ENCODE measurements at regions of chr10 and their contacts with region 1.

Region 1: GRCh38 chr10:96374985-96375830 is 16.4 kb upstream of the OPALIN start:
- DNase-seq: peak; percentile 93
- H3K4me3 ChIP-seq: peak overlapping the region; percentile 21 to 46 (median 43)
- H3K27ac ChIP-seq: no peak overlapping the region
- H3K4me1 ChIP-seq: peaks cover 0 to 52% (median 48%) of the 10 kb centered on the region in 4 donors
- H3K27me3 ChIP-seq: no peaks in the 10 kb centered on the region
- CTCF ChIP-seq: peak; percentile 92 to 99 (median 96)
- EP300 ChIP-seq: no peak
- POLR2A ChIP-seq: no peak

Region 2: GRCh38 chr10:96395931-96396877 is 21.0 kb after region 1 on chr10:
- intact Hi-C with region 1: loop called (anchors 1 kb)
- DNase-seq: peak; percentile 87
- H3K4me3 ChIP-seq: no peak overlapping the region
- H3K27ac ChIP-seq: no peak overlapping the region
- H3K4me1 ChIP-seq: peaks cover 0 to 13% (median 7%) of the 10 kb centered on the region in 4 donors
- H3K27me3 ChIP-seq: peaks cover 0 to 9% (median 0%) of the 10 kb centered on the region in 3 donors
- CTCF ChIP-seq: peak; percentile 79 to 88 (median 82)
- EP300 ChIP-seq: no peak
- POLR2A ChIP-seq: no peak

Region 3: GRCh38 chr10:96513698-96514561 is 138.7 kb after region 1 on chr10 and contains the start of gene TLL2:
- intact Hi-C with region 1: loop called (anchors 1 kb)
- DNase-seq: peak; percentile 94
- H3K4me3 ChIP-seq: peak within 1 kb of the TSS; percentile 29 to 60 (median 54)
- H3K27ac ChIP-seq: peak within 1 kb of the TSS in 3 of 4 donors; percentile 52 to 64 (median 58)
- H3K4me1 ChIP-seq: peaks cover 0 to 26% (median 22%) of the 10 kb centered on the region in 4 donors
- H3K27me3 ChIP-seq: peaks cover 0 to 20% (median 0%) of the 10 kb centered on the region in 3 donors
- CTCF ChIP-seq: peak; percentile 60 to 80 (median 73)
- EP300 ChIP-seq: no peak
- POLR2A ChIP-seq: no peak
- total RNA-seq, gene TLL2: 0.14 to 2.2 (median 0.26) TPM

Region 4: DNA sequence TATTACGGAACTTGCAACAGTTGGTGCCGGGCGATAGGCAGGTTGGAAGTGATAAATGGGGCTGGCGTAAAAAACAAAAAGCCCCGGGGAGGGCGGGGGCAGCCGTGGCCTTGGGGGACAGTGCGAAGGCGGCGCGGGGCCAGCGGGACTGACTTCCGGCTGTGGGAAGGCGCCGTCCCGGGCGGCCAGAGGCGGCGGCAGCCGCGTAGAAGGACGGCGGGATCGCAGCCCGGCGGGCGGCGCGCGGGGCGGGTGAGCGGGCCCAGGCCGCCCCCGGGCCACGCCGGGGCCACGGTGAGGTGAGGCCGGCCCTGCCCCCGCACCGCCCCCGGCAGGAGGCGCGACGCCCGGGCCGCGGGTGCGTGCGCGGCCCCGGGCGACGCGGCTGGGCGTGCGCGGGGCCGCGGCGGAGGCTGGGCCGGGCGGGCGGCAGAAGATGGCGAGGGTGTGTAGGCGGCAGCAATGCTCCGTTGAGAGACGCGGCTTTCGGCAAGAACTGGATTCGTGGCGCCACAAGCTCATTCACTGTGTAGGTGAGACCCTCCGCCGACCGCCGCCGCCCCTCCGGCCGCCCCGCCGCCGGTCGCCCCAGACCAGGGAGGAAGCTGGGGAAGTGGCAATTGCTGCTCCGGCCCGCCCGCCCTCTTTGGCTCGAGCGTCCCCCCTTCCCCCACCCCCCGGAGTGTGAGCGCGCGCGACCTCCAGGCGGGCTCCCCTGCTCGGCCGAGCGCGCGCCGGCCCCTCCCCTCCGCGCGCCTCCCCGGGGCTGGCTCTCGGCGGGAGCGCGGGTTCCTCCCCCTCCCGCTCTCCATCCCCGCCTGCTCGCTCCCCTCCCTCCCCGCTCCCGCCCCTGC is 456.9 kb after region 1 on chr10 and contains the start of gene LCOR:
- intact Hi-C with region 1: loop called (anchors 1 kb)
- DNase-seq: peak; percentile 93
- H3K4me3 ChIP-seq: peak within 1 kb of the TSS; percentile 68 to 100 (median 96)
- H3K27ac ChIP-seq: peak within 1 kb of the TSS; percentile 96 to 98 (median 96)
- H3K4me1 ChIP-seq: peaks cover 0 to 42% (median 37%) of the 10 kb centered on the region in 4 donors
- H3K27me3 ChIP-seq: no peaks in the 10 kb centered on the region
- CTCF ChIP-seq: no peak
- EP300 ChIP-seq: no peak
- POLR2A ChIP-seq: peak; percentile 58 to 61
- total RNA-seq, gene LCOR: 19.6 to 270 (median 23.6) TPM

Measured in sigmoid colon (tissue), 7 donors.